ENCODE measurements at regions of chr4 and their contacts with region 1.

Region 1: DNA sequence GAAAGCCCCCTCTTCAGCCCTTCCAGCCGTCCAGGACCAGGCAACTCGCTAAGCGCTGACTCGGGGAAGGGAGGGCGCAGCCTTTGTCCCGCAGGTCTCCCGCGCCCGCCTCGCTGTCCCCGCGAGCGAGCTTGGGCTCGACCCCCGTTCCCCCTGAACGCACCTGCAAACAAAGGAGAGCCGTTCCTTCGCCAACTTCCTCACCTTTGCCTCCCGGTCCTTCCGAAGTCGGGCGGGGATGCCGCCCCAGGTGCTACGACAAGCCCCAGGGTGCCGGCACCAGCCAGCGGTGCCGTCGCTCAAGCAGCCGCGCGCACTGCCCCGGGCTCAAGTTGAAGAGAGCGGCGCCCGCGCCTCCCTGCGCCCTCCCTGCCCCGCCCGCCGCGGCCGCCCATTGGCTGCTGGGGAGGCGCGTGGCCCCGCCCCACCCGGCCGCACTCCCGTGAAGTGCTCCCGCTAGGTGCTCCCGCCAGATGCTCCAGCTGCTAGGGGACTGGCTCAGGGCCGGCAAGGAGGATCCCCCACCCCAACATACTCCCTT is 107.1 kb downstream of the NSUN7 start:
- DNase-seq: peak; percentile 53
- H3K4me3 Mint-ChIP-seq: peak overlapping the region; percentile 60
- H3K27ac Mint-ChIP-seq: no peak overlapping the region
- H3K4me1 Mint-ChIP-seq: peaks cover 16% of the 10 kb centered on the region
- H3K27me3 Mint-ChIP-seq: peaks cover 49% of the 10 kb centered on the region

Region 2: GRCh38 chr4:40840985-40841571 is 15.8 kb before region 1 on chr4:
- CTCF ChIA-PET with region 1: interaction called, 12 read pairs
- POLR2A ChIA-PET with region 1: no interaction called
- DNase-seq: peak; percentile 79
- H3K4me3 Mint-ChIP-seq: no peak overlapping the region
- H3K27ac Mint-ChIP-seq: no peak overlapping the region
- H3K4me1 Mint-ChIP-seq: peaks cover 5% of the 10 kb centered on the region
- H3K27me3 Mint-ChIP-seq: peaks cover 4% of the 10 kb centered on the region

Measured in activated CD4-positive, alpha-beta T cell treated with anti-CD3 and anti-CD28 coated beads, Interleukin-2, amount 10 ng/mL, durations not matched to agents 7 days and 5 days (primary cell).